ENCODE measurements at regions of chr11 and their contacts with region 1.

Region 1: GRCh38 chr11:47495011-47495855 is 46.3 kb upstream of the RAPSN start:
- DNase-seq: no peak
- H3K4me3 ChIP-seq: no peak overlapping the region
- H3K27ac ChIP-seq: no peak overlapping the region
- H3K4me1 ChIP-seq: peaks cover 0 to 10% (median 0%) of the 10 kb centered on the region in 4 experiments; a peak in 4 of 7 replicates
- H3K27me3 ChIP-seq: no peaks in the 10 kb centered on the region
- CTCF ChIP-seq: no peak
- EP300 ChIP-seq: no peak
- POLR2A ChIP-seq: no peak
- RAD21 ChIP-seq: no peak

Region 2: DNA sequence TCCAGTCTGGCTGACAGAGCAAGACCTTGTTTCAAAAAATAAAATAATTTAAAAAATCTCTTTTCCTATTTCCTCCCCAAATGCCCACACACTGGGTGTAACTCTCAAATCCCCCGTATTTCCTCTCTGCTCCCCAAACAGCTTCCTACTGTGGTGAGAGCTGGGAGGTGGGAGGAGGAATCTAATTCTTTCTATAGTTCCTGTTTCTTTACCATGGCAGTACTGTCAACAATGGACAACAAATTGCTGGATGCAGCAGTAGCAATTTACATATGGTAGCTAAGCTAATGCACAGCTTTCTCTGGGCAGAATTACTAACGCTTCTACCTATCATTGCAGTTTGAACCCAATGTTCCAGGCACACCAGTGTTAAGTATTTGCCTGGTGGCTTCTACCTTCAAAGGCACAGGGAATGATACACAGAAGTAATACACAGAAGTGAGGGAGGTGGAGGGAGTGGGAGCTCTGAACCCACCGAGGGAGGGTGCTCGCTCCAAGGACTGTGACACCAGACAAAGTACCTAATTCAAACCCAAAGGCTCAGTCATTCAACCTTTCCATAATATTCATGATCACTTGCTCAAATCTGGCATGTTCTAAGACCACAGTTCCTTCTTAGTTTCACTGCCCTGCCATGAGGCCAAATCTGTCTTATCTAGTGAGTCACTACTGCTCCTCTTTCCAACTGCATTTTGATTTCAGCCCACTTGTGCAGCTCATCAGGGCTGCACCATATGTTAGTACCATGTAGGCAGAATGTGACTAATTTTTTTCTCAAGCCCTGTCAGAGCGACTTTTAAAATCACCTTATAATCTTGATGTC is 19.8 kb after region 1 on chr11:
- CTCF ChIA-PET with region 1: interaction called, 6 read pairs
- POLR2A ChIA-PET with region 1: interaction called, 10 read pairs
- DNase-seq: no peak
- H3K4me3 ChIP-seq: no peak overlapping the region
- H3K27ac ChIP-seq: 0 out of 2 replicates have a peak overlapping the region, but pooled peaks have one; percentile 40
- H3K4me1 ChIP-seq: peaks cover 2 to 13% (median 11%) of the 10 kb centered on the region in 4 experiments; a peak in 5 of 7 replicates
- H3K27me3 ChIP-seq: no peaks in the 10 kb centered on the region
- CTCF ChIP-seq: no peak
- EP300 ChIP-seq: no peak
- POLR2A ChIP-seq: no peak
- RAD21 ChIP-seq: no peak

Region 3: GRCh38 chr11:47649276-47649675 is 154.0 kb after region 1 on chr11:
- CTCF ChIA-PET with region 1: no interaction called
- POLR2A ChIA-PET with region 1: no interaction called
- DNase-seq: no peak
- H3K4me3 ChIP-seq: no peak overlapping the region
- H3K27ac ChIP-seq: no peak overlapping the region
- H3K4me1 ChIP-seq: no peaks in the 10 kb centered on the region
- H3K27me3 ChIP-seq: no peaks in the 10 kb centered on the region
- CTCF ChIP-seq: no peak
- EP300 ChIP-seq: no peak
- POLR2A ChIP-seq: no peak
- RAD21 ChIP-seq: no peak